Activated CD4-positive, alpha-beta T cell treated with anti-CD3 and anti-CD28 coated beads for 36 hours (primary cell): ENCODE measurements at regions of chr6 and their contacts with region 1.

Region 1: GRCh38 chr6:32984605-32985389 is 16.4 kb downstream of the BRD2 start:
- DNase-seq: peak; percentile 96
- ATAC-seq: peak; percentile 88
- H3K4me3 Mint-ChIP-seq: no peak overlapping the region
- H3K27ac Mint-ChIP-seq: peak overlapping the region; percentile 44
- H3K4me1 Mint-ChIP-seq: peaks cover 15% of the 10 kb centered on the region
- H3K27me3 Mint-ChIP-seq: no peaks in the 10 kb centered on the region

Region 2: GRCh38 chr6:31525932-31526591 is 1458.7 kb before region 1 on chr6:
- CTCF ChIA-PET with region 1: no interaction called
- POLR2A ChIA-PET with region 1: no interaction called
- intact Hi-C with region 1: no loop called
- DNase-seq: no peak
- ATAC-seq: no peak
- H3K4me3 Mint-ChIP-seq: no peak overlapping the region
- H3K27ac Mint-ChIP-seq: no peak overlapping the region
- H3K4me1 Mint-ChIP-seq: no peaks in the 10 kb centered on the region
- H3K27me3 Mint-ChIP-seq: no peaks in the 10 kb centered on the region

Region 3: DNA sequence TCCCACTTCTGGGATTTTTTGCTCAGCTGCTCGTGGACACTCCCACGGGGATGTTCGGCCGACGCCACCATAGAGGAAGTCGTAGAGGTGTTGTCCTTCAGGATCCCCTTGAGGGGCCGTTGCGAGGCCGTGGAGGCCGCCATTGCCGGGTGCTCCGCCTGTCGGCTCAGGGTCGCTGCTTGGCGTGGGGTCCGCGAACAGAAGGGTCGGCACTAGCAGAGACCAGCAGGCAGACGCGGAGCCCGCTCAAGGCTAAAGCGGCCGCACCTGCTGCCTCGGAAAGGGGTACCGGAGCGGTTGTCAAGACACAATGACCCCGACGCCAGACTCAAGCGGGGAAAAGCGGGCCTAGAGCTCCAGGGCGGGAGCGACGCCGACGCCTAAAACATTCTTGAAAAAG is 105.1 kb before region 1 on chr6:
- CTCF ChIA-PET with region 1: interaction called, 115 read pairs
- POLR2A ChIA-PET with region 1: interaction called, 3 read pairs
- intact Hi-C with region 1: no loop called
- DNase-seq: no peak
- ATAC-seq: no peak
- H3K4me3 Mint-ChIP-seq: no peak overlapping the region
- H3K27ac Mint-ChIP-seq: no peak overlapping the region
- H3K4me1 Mint-ChIP-seq: peaks cover 15% of the 10 kb centered on the region
- H3K27me3 Mint-ChIP-seq: peaks cover 5% of the 10 kb centered on the region

Region 4: DNA sequence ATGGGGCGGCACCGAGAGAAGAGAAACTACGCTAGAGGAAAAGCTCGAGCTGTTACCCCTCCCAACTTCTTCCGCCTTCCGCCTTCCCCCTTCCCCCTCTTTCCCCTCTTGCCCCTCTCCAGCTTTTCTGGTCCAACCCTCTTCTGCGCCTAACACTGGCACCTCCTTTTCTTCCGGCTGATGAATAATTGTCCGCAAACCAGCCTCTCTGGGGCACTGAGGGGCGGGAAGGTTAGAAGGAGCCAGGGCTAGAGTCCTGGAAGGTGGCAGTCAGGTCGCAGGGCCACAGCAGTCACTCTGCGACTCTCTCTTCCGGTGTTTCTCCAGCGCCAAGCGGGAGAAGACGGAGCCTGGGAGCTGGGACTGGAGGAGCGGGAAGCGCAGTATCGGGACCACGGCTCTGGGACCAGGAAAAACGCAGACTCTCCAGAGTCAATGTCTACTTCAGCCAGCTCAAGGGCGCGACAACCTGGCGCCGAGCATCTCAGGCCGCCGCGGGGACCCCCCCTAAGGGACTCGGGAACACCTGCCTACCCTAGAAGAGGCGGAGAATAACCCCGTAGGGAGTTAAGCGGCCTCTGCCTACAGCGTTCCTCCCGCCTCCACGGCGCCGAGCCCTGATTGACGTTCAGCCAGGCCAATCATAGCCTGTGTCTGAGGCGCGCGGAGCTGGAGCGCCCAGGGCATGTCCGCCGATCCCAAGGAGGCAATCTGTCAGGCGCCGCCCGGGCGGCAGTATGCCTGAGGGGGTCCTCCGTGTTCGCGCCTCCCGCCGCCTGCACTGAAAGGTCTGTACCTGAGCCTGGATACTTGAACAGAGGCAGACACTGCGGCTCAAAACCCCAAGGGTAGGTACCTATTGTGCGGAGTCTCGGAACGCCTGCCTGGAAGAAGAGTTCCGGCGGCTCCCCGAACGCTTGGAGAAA is 90.5 kb before region 1 on chr6:
- CTCF ChIA-PET with region 1: interaction called, 33 read pairs
- POLR2A ChIA-PET with region 1: interaction called, 4 read pairs
- intact Hi-C with region 1: loop called in 1 of 2 experiments (anchors 2 kb)
- DNase-seq: peak; percentile 96
- ATAC-seq: peak; percentile 99
- H3K4me3 Mint-ChIP-seq: peak overlapping the region; percentile 93
- H3K27ac Mint-ChIP-seq: peak overlapping the region; percentile 94
- H3K4me1 Mint-ChIP-seq: peaks cover 25% of the 10 kb centered on the region
- H3K27me3 Mint-ChIP-seq: no peaks in the 10 kb centered on the region

Region 5: GRCh38 chr6:32933636-32934085 is 51.1 kb before region 1 on chr6:
- CTCF ChIA-PET with region 1: interaction called, 154 read pairs
- POLR2A ChIA-PET with region 1: interaction called, 14 read pairs
- intact Hi-C with region 1: loop called (anchors 1 kb)
- DNase-seq: peak; percentile 85
- ATAC-seq: peak; percentile 69
- H3K4me3 Mint-ChIP-seq: no peak overlapping the region
- H3K27ac Mint-ChIP-seq: no peak overlapping the region
- H3K4me1 Mint-ChIP-seq: peaks cover 5% of the 10 kb centered on the region
- H3K27me3 Mint-ChIP-seq: no peaks in the 10 kb centered on the region

Region 6: GRCh38 chr6:32947552-32948465 is 37.0 kb before region 1 on chr6:
- CTCF ChIA-PET with region 1: interaction called, 99 read pairs
- POLR2A ChIA-PET with region 1: interaction called, 7 read pairs
- intact Hi-C with region 1: loop called (anchors 2 kb)
- DNase-seq: peak; percentile 58
- ATAC-seq: no peak
- H3K4me3 Mint-ChIP-seq: no peak overlapping the region
- H3K27ac Mint-ChIP-seq: no peak overlapping the region
- H3K4me1 Mint-ChIP-seq: peaks cover 57% of the 10 kb centered on the region
- H3K27me3 Mint-ChIP-seq: no peaks in the 10 kb centered on the region

Region 7: DNA sequence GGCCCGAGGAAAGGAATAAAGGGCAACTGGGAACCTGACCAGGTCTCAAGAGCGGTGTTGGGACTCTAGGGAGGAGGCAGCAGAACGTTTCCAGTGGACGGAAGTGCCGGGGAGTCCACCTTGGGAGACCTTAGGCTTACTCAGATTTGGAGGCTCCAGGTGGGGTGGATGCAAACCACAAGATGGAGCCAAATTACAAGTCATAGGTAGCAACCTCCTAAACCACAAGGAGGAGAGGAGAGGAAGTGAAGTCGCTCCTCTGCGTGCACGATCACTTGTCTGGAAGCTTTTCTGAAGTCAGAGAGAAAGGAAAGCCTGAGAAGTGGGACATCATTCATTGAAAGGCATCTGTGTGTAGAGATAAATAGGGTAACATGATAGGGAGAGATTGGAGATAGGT is 15.3 kb after region 1 on chr6:
- CTCF ChIA-PET with region 1: interaction called, 56 read pairs
- POLR2A ChIA-PET with region 1: no interaction called
- intact Hi-C with region 1: no loop called
- DNase-seq: peak; percentile 45
- ATAC-seq: peak; percentile 65
- H3K4me3 Mint-ChIP-seq: no peak overlapping the region
- H3K27ac Mint-ChIP-seq: no peak overlapping the region
- H3K4me1 Mint-ChIP-seq: peaks cover 7% of the 10 kb centered on the region
- H3K27me3 Mint-ChIP-seq: peaks cover 15% of the 10 kb centered on the region